ENCODE measurements at regions of chr9 and their contacts with region 1.

Region 1: GRCh38 chr9:116420993-116421538 is 266.0 kb upstream of the TRIM32 start:
- DNase-seq: no peak
- H3K4me3 ChIP-seq: no peak overlapping the region
- H3K27ac ChIP-seq: no peak overlapping the region
- H3K4me1 ChIP-seq: no peaks in the 10 kb centered on the region
- H3K27me3 ChIP-seq: no peaks in the 10 kb centered on the region
- CTCF ChIP-seq: no peak
- EP300 ChIP-seq: no peak
- POLR2A ChIP-seq: no peak
- RAD21 ChIP-seq: no peak

Region 2: GRCh38 chr9:116327701-116328405 is 93.2 kb before region 1 on chr9:
- CTCF ChIA-PET with region 1: no interaction called
- POLR2A ChIA-PET with region 1: no interaction called
- DNase-seq: no peak
- H3K4me3 ChIP-seq: no peak overlapping the region
- H3K27ac ChIP-seq: no peak overlapping the region
- H3K4me1 ChIP-seq: peaks cover 0 to 11% (median 2%) of the 10 kb centered on the region in 4 experiments; a peak in 2 of 7 replicates
- H3K27me3 ChIP-seq: peaks cover 5 to 12% (median 11%) of the 10 kb centered on the region in 4 experiments
- CTCF ChIP-seq: no peak
- EP300 ChIP-seq: no peak
- POLR2A ChIP-seq: no peak
- RAD21 ChIP-seq: no peak

Region 3: DNA sequence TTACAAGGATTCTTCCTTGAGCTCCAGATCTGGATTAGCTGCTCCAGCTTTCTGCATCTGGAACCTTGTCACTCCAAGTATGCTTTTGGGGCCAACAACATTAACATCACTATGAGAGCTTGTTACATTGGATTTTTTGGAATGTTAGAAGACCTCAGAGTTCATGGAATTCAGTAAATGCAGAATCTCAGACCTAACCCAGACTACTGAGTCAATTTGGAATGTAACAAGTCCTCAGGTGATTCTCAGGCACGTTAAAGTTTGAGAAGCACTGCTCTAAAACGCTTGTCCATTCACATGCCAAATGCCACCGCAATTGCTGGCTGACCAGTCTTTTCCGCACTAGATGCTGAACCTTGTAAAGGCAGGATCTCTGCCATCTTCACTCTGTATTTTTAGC is 14.6 kb after region 1 on chr9:
- CTCF ChIA-PET with region 1: interaction called, 10 read pairs
- POLR2A ChIA-PET with region 1: interaction called, 3 read pairs
- DNase-seq: no peak
- H3K4me3 ChIP-seq: no peak overlapping the region
- H3K27ac ChIP-seq: no peak overlapping the region
- H3K4me1 ChIP-seq: no peaks in the 10 kb centered on the region
- H3K27me3 ChIP-seq: no peaks in the 10 kb centered on the region
- CTCF ChIP-seq: no peak
- EP300 ChIP-seq: no peak
- POLR2A ChIP-seq: no peak
- RAD21 ChIP-seq: no peak